ENCODE measurements at regions of chr6 and their contacts with region 1.

Region 1: DNA sequence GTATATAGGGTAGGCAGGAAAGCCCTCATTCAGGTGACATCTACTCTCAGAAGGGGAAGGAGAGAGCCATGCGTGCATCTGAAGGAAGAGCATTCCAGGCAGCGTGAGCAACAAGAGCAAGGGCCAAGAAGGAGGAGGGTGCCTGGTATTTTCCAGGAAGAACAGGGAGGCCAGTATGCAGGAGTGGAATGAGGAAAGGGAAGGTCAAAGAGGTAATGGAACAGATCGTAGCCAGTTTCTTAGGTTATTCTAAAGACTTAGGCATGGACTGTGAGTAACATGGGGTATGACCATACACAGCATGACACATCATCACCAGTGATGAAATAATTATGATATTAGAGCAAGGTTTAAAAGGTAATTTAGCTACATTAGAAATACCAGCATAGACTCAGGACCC is 24.1 kb downstream of the ALDH8A1 start:
- DNase-seq: peak; percentile 72
- H3K4me3 ChIP-seq: no peak overlapping the region
- H3K27ac ChIP-seq: peak overlapping the region; percentile 52
- H3K4me1 ChIP-seq: peaks cover 11% of the 10 kb centered on the region
- H3K27me3 ChIP-seq: no peaks in the 10 kb centered on the region
- CTCF ChIP-seq: no peak

Region 2: GRCh38 chr6:134908906-134909516 is 16.8 kb before region 1 on chr6:
- CTCF ChIA-PET with region 1: no interaction called
- dilution Hi-C with region 1: no loop called
- in situ Hi-C with region 1: no loop called
- intact Hi-C with region 1: loop called (anchors 2 kb)
- DNase-seq: peak; percentile 100
- H3K4me3 ChIP-seq: no peak overlapping the region
- H3K27ac ChIP-seq: peak overlapping the region; percentile 99
- H3K4me1 ChIP-seq: peaks cover 41% of the 10 kb centered on the region
- H3K27me3 ChIP-seq: no peaks in the 10 kb centered on the region
- CTCF ChIP-seq: no peak

Region 3: GRCh38 chr6:134961366-134961765 is 35.6 kb after region 1 on chr6:
- CTCF ChIA-PET with region 1: no interaction called
- dilution Hi-C with region 1: loop called (anchors 5 kb)
- in situ Hi-C with region 1: no loop called
- intact Hi-C with region 1: no loop called
- DNase-seq: no peak
- H3K4me3 ChIP-seq: no peak overlapping the region
- H3K27ac ChIP-seq: no peak overlapping the region
- H3K4me1 ChIP-seq: peaks cover 18% of the 10 kb centered on the region
- H3K27me3 ChIP-seq: no peaks in the 10 kb centered on the region
- CTCF ChIP-seq: no peak

Measured in mammary epithelial cell (primary cell).